ENCODE measurements at regions of chr6 and their contacts with region 1.

Region 1: DNA sequence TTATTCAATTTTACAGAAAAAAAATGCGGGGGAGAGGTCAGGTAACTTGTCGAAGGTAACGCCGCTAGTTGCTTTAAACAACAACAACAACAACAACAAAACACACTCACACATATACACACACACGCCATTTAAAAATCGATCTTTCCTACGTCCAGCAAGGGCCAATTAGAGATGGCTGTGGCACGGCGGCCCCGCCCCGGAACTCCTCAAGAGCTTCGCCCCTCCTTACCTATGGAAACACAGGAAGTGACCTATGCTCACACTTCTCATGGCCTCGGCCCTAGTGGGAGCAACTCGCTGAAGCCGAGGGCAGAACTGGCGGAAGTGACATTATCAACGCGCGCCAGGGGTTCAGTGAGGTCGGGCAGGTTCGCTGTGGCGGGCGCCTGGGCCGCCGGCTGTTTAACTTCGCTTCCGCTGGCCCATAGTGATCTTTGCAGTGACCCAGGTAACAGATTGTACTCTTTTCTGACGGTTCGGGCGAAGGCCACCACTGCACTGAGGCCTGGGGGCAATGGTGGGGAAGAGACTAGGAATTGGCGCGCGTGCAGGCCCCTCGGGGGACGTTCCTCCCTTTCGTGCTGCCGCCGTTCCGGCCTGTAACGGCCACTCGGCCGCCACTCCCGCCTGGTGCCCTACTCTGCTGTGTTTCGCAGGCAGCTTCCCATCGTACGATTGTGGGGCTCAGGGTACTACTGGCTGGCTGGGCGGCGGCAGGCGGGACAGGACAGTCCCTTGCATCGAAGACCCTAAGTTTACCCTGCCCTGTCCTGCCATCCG is at the start of gene TBP:
- DNase-seq: peak; percentile 98
- H3K4me3 Mint-ChIP-seq: no peak within 1 kb of the TSS
- H3K27ac Mint-ChIP-seq: no peak within 1 kb of the TSS
- H3K4me1 Mint-ChIP-seq: peaks cover 42% of the 10 kb centered on the region
- H3K27me3 Mint-ChIP-seq: no peaks in the 10 kb centered on the region
- total RNA-seq, gene TBP: 19.1 to 19.6 TPM

Region 2: DNA sequence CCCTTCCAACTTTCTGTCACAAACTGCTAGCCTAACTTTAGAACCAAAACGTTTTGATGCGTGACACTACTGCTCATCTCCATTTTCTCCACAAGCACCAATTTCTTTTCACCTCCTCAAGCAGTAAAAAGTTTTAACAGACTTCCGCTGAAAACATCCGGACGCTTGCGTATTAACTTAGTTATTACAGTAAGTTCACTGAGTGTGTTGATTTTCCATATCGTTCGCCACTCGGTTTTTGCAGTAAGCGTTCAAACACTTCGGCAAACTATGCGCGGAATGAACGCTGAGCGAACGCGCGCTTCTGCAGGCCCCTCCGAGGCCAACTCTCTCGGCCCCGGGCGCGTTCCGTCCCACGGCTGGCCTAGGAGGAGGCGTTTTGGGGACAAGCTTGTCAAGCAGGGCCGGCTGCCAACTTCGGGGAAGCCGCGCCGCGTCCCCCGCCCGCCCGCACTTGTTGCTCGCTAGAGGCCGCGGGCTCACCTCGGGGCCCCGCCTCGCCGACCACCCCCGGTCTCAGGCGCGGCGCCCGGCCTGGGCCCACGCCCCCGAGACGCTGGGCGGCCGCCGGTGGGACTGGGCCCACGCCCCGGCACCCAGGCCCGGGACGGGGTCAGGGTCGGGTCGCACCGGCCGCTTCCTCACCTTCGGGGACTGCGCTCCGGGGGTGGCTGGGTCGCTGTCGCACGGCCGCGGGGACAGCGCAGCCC is 830.8 kb before region 1 on chr6:
- CTCF ChIA-PET with region 1: no interaction called
- POLR2A ChIA-PET with region 1: interaction called, 22 read pairs
- DNase-seq: peak; percentile 66
- H3K4me3 Mint-ChIP-seq: peak overlapping the region; percentile 85
- H3K27ac Mint-ChIP-seq: peak overlapping the region; percentile 95
- H3K4me1 Mint-ChIP-seq: peaks cover 43% of the 10 kb centered on the region
- H3K27me3 Mint-ChIP-seq: peaks cover 2% of the 10 kb centered on the region

Region 3: DNA sequence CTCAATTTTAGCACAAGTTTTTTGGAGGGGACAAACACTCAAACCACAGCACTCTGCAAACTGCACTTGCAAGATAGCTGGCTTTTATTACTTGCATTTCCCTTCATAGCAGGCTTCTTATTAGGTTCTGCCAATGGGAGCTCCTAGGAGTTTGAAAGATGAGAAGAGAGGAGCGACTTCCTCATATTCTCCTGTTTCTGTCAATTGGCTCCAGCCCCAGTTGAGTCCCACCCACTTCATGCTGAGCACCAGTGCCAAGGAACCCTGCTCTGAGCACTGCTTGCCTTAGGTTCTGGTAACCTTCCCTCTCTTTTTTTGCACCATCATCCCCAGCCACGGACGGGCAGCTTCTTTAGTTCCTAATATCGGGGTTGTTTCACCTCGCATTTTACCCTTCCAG is 69.0 kb before region 1 on chr6:
- CTCF ChIA-PET with region 1: no interaction called
- POLR2A ChIA-PET with region 1: no interaction called
- DNase-seq: no peak
- H3K4me3 Mint-ChIP-seq: no peak overlapping the region
- H3K27ac Mint-ChIP-seq: no peak overlapping the region
- H3K4me1 Mint-ChIP-seq: no peaks in the 10 kb centered on the region
- H3K27me3 Mint-ChIP-seq: peaks cover 20% of the 10 kb centered on the region

Region 4: GRCh38 chr6:170575250-170575649 is 21.0 kb after region 1 on chr6:
- CTCF ChIA-PET with region 1: no interaction called
- POLR2A ChIA-PET with region 1: interaction called, 12 read pairs
- DNase-seq: no peak
- H3K4me3 Mint-ChIP-seq: no peak overlapping the region
- H3K27ac Mint-ChIP-seq: no peak overlapping the region
- H3K4me1 Mint-ChIP-seq: peaks cover 5% of the 10 kb centered on the region
- H3K27me3 Mint-ChIP-seq: no peaks in the 10 kb centered on the region

Region 5: GRCh38 chr6:170584181-170584953 is 30.2 kb after region 1 on chr6 and contains the start of gene PDCD2:
- CTCF ChIA-PET with region 1: interaction called, 19 read pairs
- POLR2A ChIA-PET with region 1: interaction called, 75 read pairs
- DNase-seq: peak; percentile 94
- H3K4me3 Mint-ChIP-seq: peak within 1 kb of the TSS; percentile 98
- H3K27ac Mint-ChIP-seq: peak within 1 kb of the TSS; percentile 91
- H3K4me1 Mint-ChIP-seq: peaks cover 34% of the 10 kb centered on the region
- H3K27me3 Mint-ChIP-seq: peaks cover 3% of the 10 kb centered on the region
- total RNA-seq, gene PDCD2: 78.7 to 82.1 TPM

Region 6: GRCh38 chr6:170605574-170606259 is 51.5 kb after region 1 on chr6:
- CTCF ChIA-PET with region 1: no interaction called
- POLR2A ChIA-PET with region 1: no interaction called
- DNase-seq: no peak
- H3K4me3 Mint-ChIP-seq: no peak overlapping the region
- H3K27ac Mint-ChIP-seq: no peak overlapping the region
- H3K4me1 Mint-ChIP-seq: no peaks in the 10 kb centered on the region
- H3K27me3 Mint-ChIP-seq: peaks cover 47% of the 10 kb centered on the region

Measured in activated CD4-positive, alpha-beta memory T cell treated with anti-CD3 and anti-CD28 coated beads, Interleukin-2, amount 10 ng/mL, durations not matched to agents 7 days and 5 days (primary cell).